Gastrocnemius medialis (tissue), 4 donors: ENCODE measurements at regions of chr17 and their contacts with region 1.

Region 1: DNA sequence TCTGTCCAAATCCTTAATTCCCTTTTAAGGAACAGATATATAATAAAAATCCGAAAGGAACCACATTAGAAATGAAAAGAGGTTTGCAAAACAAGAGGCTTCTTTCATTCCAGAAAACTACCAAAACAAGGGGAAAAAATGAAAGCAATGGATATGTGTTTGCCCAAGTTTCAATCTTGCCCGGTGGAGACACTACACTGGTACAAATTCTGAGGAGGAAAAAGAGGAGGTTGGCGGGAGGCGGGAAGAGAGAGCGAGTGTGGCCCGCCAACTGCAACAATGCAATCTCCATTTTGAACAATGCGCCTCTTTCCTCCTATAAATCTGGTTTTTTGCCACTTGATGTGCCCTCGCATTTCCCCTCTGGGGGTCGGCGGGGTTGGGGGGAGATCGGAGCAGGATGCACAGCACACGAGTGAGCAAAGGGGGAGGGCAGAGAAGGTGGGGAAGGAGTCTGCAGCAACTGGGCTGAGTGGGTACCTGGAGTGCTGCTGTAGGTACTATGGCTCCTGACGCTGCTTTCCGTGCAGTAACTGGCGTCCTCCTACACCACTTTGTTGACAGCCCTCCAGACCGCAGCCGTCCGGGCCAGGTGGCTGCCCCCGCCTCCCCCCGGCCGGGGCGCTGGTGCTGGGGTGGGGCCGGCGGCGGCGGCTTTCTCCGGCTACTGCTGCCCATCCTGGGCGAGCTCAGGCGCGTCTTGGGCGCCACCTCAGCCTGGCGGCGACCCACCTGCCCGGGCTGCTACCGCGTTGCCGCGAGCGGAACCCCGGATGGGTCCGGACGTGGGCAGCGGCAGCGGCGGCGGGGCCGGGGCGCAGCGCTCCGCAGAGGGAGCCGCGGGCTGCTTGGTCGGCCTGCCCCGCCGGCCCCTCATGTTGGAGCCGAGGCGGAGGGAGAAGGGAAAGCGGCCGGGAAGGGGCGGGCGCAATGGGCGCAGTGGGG is 93.8 kb upstream of the PLEKHM1 start:
- DNase-seq: peak; percentile 32 to 48
- ATAC-seq: peak; percentile 58 to 59
- H3K4me3 ChIP-seq: peak overlapping the region; percentile 47 to 73 (median 62)
- H3K27ac ChIP-seq: peak overlapping the region; percentile 39 to 82 (median 73)
- H3K4me1 ChIP-seq: peaks cover 10 to 12% of the 10 kb centered on the region in 2 donors
- H3K27me3 ChIP-seq: peaks cover 32 to 37% (median 33%) of the 10 kb centered on the region in 3 donors
- CTCF ChIP-seq: no peak
- POLR2A ChIP-seq: peak; percentile 11 to 35

Region 2: DNA sequence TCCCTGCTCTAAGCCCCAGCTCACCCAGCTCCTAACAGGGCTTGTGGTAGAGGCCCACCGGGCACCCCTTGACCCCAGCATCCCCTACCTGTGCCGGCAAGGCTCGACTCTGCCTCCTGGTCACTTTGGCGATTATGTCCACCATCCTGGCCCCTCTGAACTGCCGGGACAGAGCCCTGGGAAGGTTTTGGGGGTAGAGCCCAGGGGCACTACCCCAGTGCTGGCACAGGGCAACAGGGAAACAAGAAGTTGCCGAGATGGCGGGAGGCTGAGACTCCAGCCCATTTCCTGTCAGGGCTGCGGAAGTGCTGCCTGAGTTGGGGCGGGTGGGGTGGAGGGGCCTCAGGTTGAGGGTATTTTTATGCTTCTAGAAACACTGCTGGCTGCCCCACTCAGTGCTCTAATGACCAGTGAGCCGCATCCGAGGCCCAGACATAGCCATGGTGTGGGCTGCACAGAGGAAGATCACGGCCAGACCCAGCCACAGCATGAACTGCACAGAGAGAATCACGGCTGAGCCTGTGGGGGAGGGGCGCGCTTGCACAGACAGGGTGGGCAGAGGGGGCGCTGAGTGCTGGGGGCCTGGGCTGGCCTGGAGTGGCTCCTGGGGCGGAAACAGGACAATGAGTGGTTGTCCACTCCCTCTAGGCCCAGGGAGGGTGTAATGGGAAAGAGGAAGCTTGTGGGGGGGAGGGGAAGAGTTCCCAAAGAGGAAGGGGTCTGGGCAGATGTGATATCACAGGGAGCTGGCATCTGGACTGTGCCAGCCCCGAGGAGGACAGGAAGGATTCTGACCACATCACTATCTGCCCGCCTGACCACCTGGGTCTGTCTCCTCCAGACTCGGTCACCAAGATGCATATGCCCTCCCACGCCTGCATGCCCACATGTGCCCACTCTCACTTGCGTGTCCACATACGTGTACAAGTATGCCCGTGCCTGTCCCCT is 173.9 kb before region 1 on chr17:
- in situ Hi-C with region 1: loop called in 1 of 4 experiments (anchors 25 kb)
- intact Hi-C with region 1: no loop called
- DNase-seq: no peak
- ATAC-seq: no peak
- H3K4me3 ChIP-seq: peak overlapping the region in 2 of 4 donors; percentile 19 to 35
- H3K27ac ChIP-seq: peak overlapping the region in 2 of 4 donors; percentile 30 to 39
- H3K4me1 ChIP-seq: peaks cover 9 to 16% of the 10 kb centered on the region in 2 donors
- H3K27me3 ChIP-seq: peaks cover 0 to 5% (median 3%) of the 10 kb centered on the region in 3 donors
- CTCF ChIP-seq: no peak
- POLR2A ChIP-seq: no peak

Region 3: GRCh38 chr17:45990886-45991285 is 406.5 kb after region 1 on chr17:
- in situ Hi-C with region 1: no loop called
- intact Hi-C with region 1: no loop called
- DNase-seq: no peak
- ATAC-seq: no peak
- H3K4me3 ChIP-seq: no peak overlapping the region
- H3K27ac ChIP-seq: no peak overlapping the region
- H3K4me1 ChIP-seq: no peaks in the 10 kb centered on the region
- H3K27me3 ChIP-seq: no peaks in the 10 kb centered on the region
- CTCF ChIP-seq: no peak
- POLR2A ChIP-seq: no peak

Region 4: GRCh38 chr17:46266656-46267544 is 682.5 kb after region 1 on chr17:
- in situ Hi-C with region 1: loop called in 1 of 4 experiments (anchors 25 kb)
- intact Hi-C with region 1: no loop called
- DNase-seq: peak; percentile 65 to 84
- ATAC-seq: peak; percentile 85 to 88
- H3K4me3 ChIP-seq: peak overlapping the region; percentile 76 to 100 (median 90)
- H3K27ac ChIP-seq: peak overlapping the region; percentile 95 to 100 (median 95)
- H3K4me1 ChIP-seq: peaks cover 7 to 22% of the 10 kb centered on the region in 2 donors
- H3K27me3 ChIP-seq: no peaks in the 10 kb centered on the region
- CTCF ChIP-seq: peak in 1 of 5 experiments; percentile 27
- POLR2A ChIP-seq: peak; percentile 44 to 62